Calu3 (cell line): ENCODE measurements at regions of chr10 and their contacts with region 1.

Region 1: DNA sequence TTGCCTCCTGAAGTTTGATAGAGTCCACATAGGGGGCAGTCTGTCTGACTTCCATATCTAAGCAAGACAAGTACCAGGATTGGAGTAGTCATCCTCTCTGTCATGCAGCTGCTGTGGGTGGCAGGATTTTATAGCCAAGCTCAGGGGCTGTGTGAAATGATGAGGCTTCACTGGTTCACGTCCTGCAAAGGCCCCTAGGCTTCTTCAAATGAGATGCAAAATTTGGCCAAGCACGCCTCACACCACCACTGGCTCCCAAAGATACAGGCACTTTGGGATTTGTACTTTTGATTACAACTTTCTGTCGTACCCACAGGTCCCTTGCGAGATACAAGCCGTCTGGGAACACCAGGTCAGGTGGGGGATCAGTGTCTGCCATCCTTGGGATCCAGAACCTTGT is 67.1 kb downstream of the WDFY4 start:
- DNase-seq: no peak
- H3K4me3 Mint-ChIP-seq: no peak overlapping the region
- H3K27ac Mint-ChIP-seq: no peak overlapping the region
- H3K4me1 Mint-ChIP-seq: no peaks in the 10 kb centered on the region
- H3K27me3 Mint-ChIP-seq: peaks cover 46% of the 10 kb centered on the region
- CTCF ChIP-seq: no peak

Region 2: DNA sequence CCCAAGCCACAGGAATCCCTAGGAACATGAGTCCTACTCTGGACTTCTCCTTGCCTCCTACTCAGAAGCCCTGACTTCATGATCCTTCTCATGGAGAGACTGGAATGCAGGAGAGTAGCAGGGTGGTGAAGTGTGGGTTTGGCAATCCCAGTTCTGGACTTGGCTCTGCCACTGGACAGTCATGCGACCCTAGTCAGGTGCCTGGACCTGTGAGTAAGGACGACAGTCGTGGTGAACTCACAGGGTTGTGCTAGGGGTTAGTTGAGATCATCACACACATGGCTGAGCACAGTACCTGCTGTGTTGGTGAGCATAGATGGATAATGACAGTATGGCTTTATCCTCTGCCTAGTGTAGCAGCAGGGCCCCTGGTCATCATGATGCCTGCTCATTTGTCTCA is 70.0 kb after region 1 on chr10:
- CTCF ChIA-PET with region 1: no interaction called
- intact Hi-C with region 1: loop called (anchors 5 kb)
- DNase-seq: no peak
- H3K4me3 Mint-ChIP-seq: no peak overlapping the region
- H3K27ac Mint-ChIP-seq: no peak overlapping the region
- H3K4me1 Mint-ChIP-seq: no peaks in the 10 kb centered on the region
- H3K27me3 Mint-ChIP-seq: peaks cover 63% of the 10 kb centered on the region
- CTCF ChIP-seq: no peak

Region 3: GRCh38 chr10:49194212-49194920 is 442.6 kb after region 1 on chr10:
- CTCF ChIA-PET with region 1: no interaction called
- intact Hi-C with region 1: no loop called
- DNase-seq: no peak
- H3K4me3 Mint-ChIP-seq: no peak overlapping the region
- H3K27ac Mint-ChIP-seq: no peak overlapping the region
- H3K4me1 Mint-ChIP-seq: no peaks in the 10 kb centered on the region
- H3K27me3 Mint-ChIP-seq: peaks cover 47% of the 10 kb centered on the region
- CTCF ChIP-seq: no peak